ENCODE measurements at regions of chr9 and their contacts with region 1.

Region 1: GRCh38 chr9:91795598-91796241 is 154.3 kb downstream of the ROR2 start:
- DNase-seq: peak; percentile 87
- H3K4me3 ChIP-seq: no peak overlapping the region
- H3K27ac ChIP-seq: peak overlapping the region; percentile 58
- H3K4me1 ChIP-seq: peaks cover 32% of the 10 kb centered on the region
- H3K27me3 ChIP-seq: peaks cover 9% of the 10 kb centered on the region
- CTCF ChIP-seq: no peak

Region 2: DNA sequence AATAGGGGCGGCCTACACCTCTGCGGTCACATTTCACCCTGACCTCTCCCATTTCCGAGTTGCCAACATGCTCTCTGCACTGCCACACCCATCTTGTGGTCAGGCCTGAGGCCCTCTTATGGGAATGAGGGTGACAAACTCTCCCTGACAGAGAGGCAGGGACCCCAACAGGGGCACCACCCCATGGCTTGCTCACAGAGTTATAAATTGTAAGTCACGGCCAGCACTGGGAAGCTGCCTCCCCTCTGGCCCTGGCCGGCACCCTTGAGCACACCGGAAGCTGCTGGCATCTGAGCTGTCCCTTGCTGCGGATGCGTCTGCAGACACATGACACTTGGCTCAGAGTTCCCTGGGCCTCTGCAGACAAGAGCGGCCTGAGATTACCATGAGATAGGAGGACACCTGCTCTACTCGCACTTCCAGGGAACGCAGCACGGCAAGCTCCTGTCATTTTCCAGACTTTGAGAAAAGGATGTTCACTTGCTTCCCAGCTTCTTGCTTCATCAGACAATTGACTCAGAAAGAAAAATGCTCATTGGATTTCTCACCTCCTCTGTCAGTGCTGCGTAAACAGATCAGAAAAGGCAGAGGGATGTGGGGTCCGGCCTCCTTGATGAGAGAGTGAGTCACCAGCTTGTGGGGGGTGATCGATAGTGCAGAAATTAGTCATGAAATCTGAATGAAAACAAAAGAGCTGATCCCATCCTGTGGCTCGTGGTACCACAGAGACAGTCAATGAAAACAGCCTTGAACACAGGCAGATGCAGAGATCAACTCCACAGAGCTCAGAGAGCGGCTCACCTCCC is 724.3 kb before region 1 on chr9:
- CTCF ChIA-PET with region 1: no interaction called
- POLR2A ChIA-PET with region 1: no interaction called
- intact Hi-C with region 1: no loop called
- DNase-seq: no peak
- H3K4me3 ChIP-seq: no peak overlapping the region
- H3K27ac ChIP-seq: no peak overlapping the region
- H3K4me1 ChIP-seq: no peaks in the 10 kb centered on the region
- H3K27me3 ChIP-seq: no peaks in the 10 kb centered on the region
- CTCF ChIP-seq: no peak

Region 3: DNA sequence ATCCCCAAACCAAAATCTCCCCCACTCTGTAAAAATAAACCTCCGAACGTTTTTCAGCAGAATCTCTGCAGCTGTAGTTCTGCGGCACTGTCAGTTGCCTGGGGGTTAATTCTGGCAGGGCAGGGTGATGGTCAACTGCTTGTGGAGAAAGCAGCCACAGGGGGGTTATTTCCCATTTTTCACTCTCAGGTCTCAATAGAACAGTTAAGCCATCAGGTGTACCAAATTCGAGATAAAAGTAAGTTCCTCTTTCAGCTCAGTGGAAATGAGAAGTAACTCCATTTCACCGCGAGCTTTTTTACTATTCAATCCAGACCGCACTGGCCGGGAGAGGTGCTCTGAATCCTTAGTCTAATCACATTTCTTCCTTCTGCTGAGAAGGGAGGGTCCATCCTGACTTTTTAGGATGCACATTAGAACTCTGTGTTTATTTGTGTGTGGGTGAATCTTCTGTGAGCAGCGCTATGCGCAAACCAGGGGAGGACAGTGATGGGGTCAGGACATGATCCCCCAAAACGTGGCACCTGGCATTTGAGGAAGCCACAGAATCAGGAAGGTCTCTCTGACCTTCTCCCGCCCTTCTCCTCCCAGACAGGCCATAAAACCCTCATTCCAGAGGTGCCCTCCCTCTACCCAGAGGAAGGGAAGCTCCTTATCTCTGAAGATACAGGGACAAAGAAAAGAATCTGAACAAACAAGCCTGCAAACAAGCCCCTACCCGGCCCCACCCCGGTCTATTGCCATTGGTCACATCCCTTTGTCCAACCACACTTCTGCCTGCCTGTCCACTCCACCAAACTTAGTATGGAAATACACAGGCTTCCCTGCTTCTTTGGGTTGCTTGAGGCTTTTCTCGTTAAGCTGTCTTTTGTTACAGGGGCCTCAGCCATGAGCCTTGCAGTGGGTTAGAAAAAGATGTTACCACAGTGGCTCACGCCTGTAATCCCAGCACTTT is 74.7 kb before region 1 on chr9:
- CTCF ChIA-PET with region 1: no interaction called
- POLR2A ChIA-PET with region 1: interaction called, 13 read pairs
- intact Hi-C with region 1: no loop called
- DNase-seq: no peak
- H3K4me3 ChIP-seq: no peak overlapping the region
- H3K27ac ChIP-seq: no peak overlapping the region
- H3K4me1 ChIP-seq: no peaks in the 10 kb centered on the region
- H3K27me3 ChIP-seq: no peaks in the 10 kb centered on the region
- CTCF ChIP-seq: no peak

Region 4: DNA sequence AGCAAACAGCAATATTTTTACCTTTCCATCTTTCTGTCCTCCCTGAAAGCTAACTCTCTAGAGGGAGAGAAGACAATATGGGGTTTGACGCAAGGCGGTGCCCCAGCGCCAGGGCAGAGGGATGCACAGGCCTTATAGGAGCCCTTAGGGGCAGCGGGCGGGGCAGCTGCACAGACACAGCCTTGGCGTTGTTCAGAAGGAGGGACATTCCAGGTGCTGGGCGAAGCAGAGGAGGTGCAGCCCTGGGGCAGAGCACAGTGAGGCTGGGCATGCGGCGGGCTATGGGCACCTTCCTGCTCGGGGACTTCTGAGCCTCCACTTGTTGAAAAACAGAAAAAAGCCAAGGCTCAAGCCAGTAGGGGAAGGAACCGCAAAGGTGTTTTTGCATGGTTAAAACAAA is 1002.6 kb after region 1 on chr9:
- CTCF ChIA-PET with region 1: no interaction called
- POLR2A ChIA-PET with region 1: interaction called, 20 read pairs
- intact Hi-C with region 1: no loop called
- DNase-seq: no peak
- H3K4me3 ChIP-seq: no peak overlapping the region
- H3K27ac ChIP-seq: no peak overlapping the region
- H3K4me1 ChIP-seq: no peaks in the 10 kb centered on the region
- H3K27me3 ChIP-seq: peaks cover 55% of the 10 kb centered on the region
- CTCF ChIP-seq: no peak